GM23248 (cell line): ENCODE measurements at regions of chr3 and their contacts with region 1.

Region 1: GRCh38 chr3:41900265-41900664 is 61.6 kb downstream of the ULK4 start:
- DNase-seq: peak; percentile 33
- H3K4me3 ChIP-seq: no peak overlapping the region
- H3K27ac ChIP-seq: no peak overlapping the region
- H3K4me1 ChIP-seq: peaks cover 8% of the 10 kb centered on the region; the same call in 1 of the 2 replicates
- H3K27me3 ChIP-seq: no peaks in the 10 kb centered on the region

Region 2: DNA sequence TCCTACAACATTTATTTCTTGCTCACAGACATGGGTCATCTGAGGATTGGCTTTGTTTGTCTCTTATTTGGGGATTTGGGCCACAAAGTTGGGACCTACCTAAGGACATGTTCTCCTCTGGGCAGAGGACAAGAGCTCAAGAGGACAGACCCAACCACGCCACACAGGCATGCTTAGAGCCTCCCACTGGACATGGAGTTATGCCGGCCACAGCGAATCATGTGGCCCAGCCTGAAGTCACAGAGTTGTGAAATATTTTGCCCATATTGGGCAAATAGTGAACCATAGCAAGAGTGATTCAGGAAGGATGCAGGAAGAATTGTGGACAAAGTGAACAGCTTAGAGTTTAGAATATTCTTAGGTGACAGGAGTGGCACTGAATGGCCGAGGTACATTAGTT is 200.8 kb after region 1 on chr3:
- in situ Hi-C with region 1: loop called (anchors 10 kb)
- DNase-seq: peak; percentile 91
- H3K4me3 ChIP-seq: no peak overlapping the region
- H3K27ac ChIP-seq: peak overlapping the region; percentile 58
- H3K4me1 ChIP-seq: peaks cover 44% of the 10 kb centered on the region
- H3K27me3 ChIP-seq: no peaks in the 10 kb centered on the region

Region 3: DNA sequence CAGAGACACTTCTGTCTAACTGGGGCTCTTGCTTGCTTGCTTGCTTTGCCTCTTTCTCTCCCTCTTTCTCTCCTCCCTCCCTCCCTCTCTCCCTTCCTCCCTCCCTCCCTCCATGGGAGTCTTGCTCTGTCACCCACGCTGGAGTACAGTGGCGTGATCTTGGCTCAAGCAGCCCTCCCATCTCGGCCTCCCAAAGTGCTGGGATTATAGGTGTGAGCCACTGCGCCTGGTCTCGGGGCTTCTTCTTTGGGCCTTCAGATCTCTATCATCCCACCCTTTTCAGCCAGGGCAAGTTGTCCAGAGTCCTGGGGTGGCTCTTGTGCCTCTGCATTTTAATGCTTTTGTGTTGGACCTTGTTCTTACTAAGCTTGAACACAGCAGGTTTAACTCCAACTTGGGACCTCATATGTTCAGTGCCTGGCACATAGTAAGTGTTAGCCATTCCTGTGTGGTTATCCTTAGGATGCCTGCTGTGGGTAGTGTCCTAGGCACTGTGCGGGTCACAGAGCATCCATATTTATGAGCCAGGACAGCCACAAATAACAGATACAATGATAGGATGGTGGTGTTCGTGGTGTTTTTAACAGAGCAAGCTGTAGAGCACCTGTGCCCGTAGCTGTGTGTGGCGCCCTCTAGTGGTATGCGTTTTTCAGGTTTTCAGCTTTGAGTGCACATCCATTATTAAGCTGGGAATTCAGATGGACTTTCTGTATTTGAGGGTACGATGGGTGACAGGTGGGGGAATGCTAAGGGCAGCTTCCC is 290.6 kb after region 1 on chr3:
- in situ Hi-C with region 1: loop called (anchors 10 kb)
- DNase-seq: peak; percentile 59
- H3K4me3 ChIP-seq: no peak overlapping the region
- H3K27ac ChIP-seq: no peak overlapping the region
- H3K4me1 ChIP-seq: no peaks in the 10 kb centered on the region
- H3K27me3 ChIP-seq: no peaks in the 10 kb centered on the region